Heart right ventricle (tissue), 16 donors: ENCODE measurements at regions of chr14 and their contacts with region 1.

Region 1: DNA sequence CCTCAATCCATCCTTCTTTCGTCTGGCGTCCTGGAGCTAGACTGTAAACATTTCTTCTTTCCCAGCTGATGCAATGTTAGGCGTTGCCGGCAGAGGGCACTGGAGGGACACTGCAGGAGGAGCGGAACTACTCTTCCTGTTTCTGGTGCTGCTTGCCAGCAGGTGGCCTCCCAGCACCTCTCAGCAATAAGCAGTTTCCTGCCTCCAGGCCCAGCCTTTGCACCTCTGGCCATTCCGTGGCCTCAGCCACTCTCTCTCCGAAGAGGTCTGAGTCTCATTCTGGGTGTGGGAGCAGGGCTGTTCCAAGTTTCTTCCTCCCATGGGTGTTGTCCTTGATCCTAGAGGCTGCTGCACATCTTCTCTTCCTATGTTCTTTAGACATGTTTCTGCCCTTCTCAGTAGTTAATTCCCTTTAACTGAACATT is 7.5 kb upstream of the ASPG start:
- DNase-seq: peak; percentile 83 to 86
- ATAC-seq: peak; percentile 69 to 92 (median 88)
- H3K4me3 ChIP-seq: no peak overlapping the region
- H3K27ac ChIP-seq: no peak overlapping the region
- H3K4me1 ChIP-seq: peaks cover 0 to 6% (median 4%) of the 10 kb centered on the region in 9 donors
- H3K27me3 ChIP-seq: peaks cover 0 to 17% (median 4%) of the 10 kb centered on the region in 7 donors
- CTCF ChIP-seq: peak; percentile 98 to 100 (median 100)

Region 2: DNA sequence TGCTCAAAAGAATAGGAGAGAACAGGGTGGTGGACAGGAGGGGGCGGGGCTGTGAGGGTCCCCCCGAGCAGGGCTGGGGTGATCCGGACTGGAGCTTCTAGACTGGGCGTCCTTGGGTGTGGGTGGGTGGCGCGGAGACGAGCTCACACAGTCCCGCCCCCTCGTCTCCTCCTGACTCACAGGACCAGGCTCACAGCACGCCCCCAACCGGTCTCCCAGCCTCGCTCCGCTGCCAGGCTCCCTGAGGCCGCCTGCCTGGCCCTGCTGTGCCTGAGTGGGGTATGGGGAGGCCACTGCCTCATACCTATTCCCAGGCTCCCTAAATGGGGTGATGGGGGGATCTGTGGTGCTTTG is 30.1 kb after region 1 on chr14:
- intact Hi-C with region 1: no loop called
- DNase-seq: no peak
- ATAC-seq: no peak
- H3K4me3 ChIP-seq: no peak overlapping the region
- H3K27ac ChIP-seq: no peak overlapping the region
- H3K4me1 ChIP-seq: no peaks in the 10 kb centered on the region
- H3K27me3 ChIP-seq: peaks cover 0 to 29% (median 5%) of the 10 kb centered on the region in 7 donors
- CTCF ChIP-seq: no peak

Region 3: GRCh38 chr14:104130974-104131651 is 53.1 kb after region 1 on chr14:
- intact Hi-C with region 1: loop called (anchors 1 to 5 kb)
- DNase-seq: peak; percentile 62 to 69
- ATAC-seq: peak; percentile 49 to 81 (median 68)
- H3K4me3 ChIP-seq: no peak overlapping the region
- H3K27ac ChIP-seq: no peak overlapping the region
- H3K4me1 ChIP-seq: peaks cover 0 to 11% (median 10%) of the 10 kb centered on the region in 9 donors
- H3K27me3 ChIP-seq: peaks cover 7 to 41% (median 30%) of the 10 kb centered on the region in 7 donors
- CTCF ChIP-seq: peak; percentile 32 to 76 (median 70)

Region 4: DNA sequence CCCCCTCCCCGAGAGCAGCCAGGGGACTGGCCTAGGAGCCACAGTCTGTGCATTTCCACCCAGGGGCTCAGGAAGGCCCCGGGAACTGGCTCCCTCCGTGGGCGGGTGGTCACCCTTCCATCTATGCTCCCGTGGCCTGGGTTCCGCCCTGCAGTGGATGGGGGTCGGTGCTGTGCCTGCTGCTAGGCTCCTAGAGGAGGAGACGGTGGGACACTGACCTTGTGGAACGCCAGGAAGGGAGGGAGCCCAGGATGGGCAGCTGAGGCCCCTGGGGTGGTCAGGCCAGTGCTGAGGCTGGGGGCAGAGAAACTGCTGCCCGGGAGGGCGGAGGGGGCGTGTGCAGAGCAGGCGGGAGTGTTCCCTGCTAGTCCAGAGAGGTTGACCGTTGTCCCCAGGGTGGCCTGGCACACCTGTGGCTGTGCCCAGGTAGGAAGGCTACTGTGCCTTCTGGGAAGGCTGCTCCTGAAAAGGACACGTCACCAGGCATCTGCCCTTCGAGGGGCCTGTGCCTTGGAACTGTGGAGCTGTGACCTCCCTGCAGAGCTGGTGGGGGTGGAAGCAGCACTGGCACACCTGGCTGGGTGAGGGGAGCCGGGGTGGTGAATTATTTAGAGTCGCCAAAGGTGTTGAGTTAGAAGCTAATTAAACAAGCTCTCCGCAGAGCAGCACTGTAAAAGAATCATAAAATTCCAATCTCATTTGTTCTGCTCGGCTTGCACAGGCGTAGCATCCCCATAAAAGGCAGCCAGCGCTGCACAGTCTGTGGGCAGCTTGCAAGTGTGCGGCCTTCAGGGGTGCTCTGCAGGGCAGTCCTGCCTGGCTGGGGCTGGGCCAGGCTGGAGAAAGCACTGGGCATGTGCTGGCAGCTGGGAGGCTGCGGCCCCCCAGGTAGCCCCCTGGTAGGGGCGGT is 205.4 kb after region 1 on chr14:
- intact Hi-C with region 1: no loop called
- DNase-seq: no peak
- ATAC-seq: no peak
- H3K4me3 ChIP-seq: no peak overlapping the region
- H3K27ac ChIP-seq: no peak overlapping the region
- H3K4me1 ChIP-seq: no peaks in the 10 kb centered on the region
- H3K27me3 ChIP-seq: peaks cover 0 to 3% (median 0%) of the 10 kb centered on the region in 7 donors
- CTCF ChIP-seq: no peak

Region 5: DNA sequence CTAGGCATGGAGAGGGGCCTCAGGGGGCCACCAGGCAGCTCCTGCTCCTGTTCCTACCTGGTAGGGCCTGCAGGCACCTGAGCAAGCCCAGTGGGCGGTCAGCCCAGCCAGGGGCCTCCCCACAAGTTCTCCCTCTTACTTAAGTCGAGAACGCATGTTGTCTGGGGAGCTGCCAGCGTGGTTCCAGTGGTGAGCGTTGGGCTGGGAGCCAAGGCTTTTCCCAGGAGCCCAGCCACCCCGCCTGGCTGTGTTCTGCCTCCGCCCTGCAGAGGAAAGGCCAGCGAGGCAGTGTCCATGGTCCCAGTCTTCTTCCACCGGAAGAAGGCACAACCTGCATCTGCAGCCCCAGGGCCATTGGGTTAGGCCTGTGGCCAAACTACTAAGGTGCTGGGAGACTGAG is 502.9 kb after region 1 on chr14:
- intact Hi-C with region 1: loop called in 1 of 10 experiments (anchors 10 kb)
- DNase-seq: peak; percentile 73 to 83
- ATAC-seq: peak; percentile 3 to 57 (median 40)
- H3K4me3 ChIP-seq: peak overlapping the region; percentile 38 to 60 (median 54)
- H3K27ac ChIP-seq: peak overlapping the region; percentile 81 to 98 (median 93)
- H3K4me1 ChIP-seq: peaks cover 8 to 92% (median 48%) of the 10 kb centered on the region in 9 donors
- H3K27me3 ChIP-seq: peaks cover 0 to 39% (median 11%) of the 10 kb centered on the region in 7 donors
- CTCF ChIP-seq: no peak

Region 6: DNA sequence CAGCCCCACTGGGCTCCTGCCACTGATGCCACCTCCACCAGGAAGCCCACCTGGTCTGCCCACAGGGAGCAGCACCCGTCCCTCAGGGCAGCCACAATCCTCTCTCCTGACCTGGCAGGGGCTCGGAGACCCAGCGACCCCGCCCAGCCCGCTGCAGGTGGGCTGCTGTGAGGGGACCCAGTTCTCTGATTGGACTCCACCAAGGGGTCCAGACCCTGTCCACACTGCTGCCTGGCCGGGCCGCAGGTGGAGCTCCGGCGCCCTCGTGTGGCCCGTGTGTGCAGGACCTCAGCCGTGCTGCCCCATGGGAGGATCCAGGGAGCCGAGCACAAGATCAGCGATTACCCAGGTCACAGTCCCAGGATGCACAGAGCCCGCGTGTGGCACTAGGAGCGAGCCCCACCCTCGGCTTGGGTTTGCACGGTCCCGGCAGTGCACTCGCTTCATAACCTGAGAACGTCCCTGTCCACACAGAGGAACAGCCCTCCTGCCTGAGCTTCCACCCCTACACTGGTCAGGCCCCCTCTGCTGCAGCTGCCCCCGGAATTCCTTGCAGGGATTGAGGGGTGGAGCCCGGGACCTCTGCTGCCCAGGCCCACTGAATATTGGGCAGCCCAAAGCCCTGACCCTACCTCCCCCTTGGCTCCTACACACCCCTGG is 562.0 kb after region 1 on chr14:
- intact Hi-C with region 1: loop called in 6 of 10 experiments (anchors 1 to 10 kb)
- DNase-seq: peak; percentile 48 to 62
- ATAC-seq: peak; percentile 77 to 95 (median 86)
- H3K4me3 ChIP-seq: no peak overlapping the region
- H3K27ac ChIP-seq: no peak overlapping the region
- H3K4me1 ChIP-seq: peaks cover 0 to 16% (median 4%) of the 10 kb centered on the region in 9 donors
- H3K27me3 ChIP-seq: peaks cover 0 to 46% (median 20%) of the 10 kb centered on the region in 7 donors
- CTCF ChIP-seq: peak; percentile 75 to 94 (median 92)